MCF 10A (cell line): ENCODE measurements at regions of chr5 and their contacts with region 1.

Region 1: DNA sequence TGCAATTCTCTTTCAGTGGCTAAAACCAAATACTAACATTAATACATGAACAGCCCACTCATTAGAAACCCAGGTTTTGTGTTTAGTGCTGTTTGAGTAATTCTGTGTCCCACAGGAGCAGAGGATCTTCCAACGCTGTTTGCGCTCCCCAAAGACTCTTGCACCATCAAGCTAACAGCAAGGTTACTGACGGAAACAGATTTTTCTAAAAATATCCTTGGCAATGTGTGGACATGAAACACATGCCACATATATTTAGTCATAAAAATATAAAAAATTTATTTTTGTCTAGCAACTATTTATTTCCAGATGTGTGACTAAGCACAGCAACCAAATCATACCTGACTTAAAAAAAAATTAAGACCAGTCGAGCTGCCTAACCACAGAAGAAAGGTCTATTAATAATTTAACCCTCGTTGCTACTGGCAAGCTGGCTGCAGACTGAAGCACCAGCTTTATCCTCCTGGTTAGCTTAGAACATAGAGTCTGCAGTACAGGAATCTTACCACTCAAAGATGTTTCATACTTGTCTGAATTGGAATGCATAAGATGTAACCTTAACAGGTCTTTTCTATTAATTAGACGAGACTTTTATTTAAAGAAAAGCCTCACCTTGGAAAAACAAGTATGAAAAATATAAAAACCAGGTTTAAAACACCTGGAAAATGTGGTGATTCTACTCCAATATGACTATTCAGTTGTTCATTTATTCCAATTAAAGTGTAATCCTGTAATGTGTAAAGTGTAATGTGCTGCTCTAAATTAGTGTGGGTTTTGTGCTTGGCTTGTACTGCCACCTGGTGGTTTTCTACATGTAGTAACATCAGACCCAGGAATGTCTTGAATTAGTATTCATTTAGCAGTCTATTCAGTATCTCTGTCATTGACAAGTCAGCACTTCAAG is 272.5 kb downstream of the EPB41L4A start:
- DNase-seq: peak; percentile 83
- H3K4me3 Mint-ChIP-seq: no peak overlapping the region
- H3K27ac Mint-ChIP-seq: no peak overlapping the region
- H3K4me1 Mint-ChIP-seq: peaks cover 22% of the 10 kb centered on the region
- H3K27me3 Mint-ChIP-seq: no peaks in the 10 kb centered on the region
- CTCF ChIP-seq: peak; percentile 81

Region 2: DNA sequence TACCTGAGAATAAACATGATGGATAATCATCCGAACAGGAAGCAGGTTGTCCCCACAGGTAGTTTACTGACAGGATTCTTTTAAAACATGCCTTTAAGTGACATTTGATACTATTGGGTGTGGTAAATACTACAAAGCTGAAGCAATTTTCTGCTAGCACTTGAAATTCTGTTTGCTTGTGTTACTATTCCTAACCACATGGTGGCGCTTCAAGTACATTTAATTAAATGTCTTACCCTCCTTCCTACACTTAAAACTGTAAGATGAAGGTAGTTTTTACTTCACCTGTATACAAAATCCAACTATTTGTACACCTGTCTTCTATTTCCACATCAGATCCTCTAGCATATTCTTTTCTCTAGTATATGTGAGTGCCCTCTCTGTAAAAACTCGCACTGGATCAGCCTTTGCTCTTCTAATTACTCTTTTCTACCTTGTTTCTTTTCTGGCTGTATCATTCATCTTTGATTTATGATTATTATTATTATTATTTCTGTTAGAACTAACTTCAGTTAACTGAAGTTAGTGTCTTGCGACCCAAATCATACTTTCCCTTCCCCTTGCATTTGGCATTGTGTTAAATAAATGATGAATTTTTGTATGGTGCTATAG is 1389.4 kb before region 1 on chr5:
- CTCF ChIA-PET with region 1: no interaction called
- POLR2A ChIA-PET with region 1: no interaction called
- intact Hi-C with region 1: loop called (anchors 5 kb)
- DNase-seq: peak; percentile 67
- H3K4me3 Mint-ChIP-seq: no peak overlapping the region
- H3K27ac Mint-ChIP-seq: no peak overlapping the region
- H3K4me1 Mint-ChIP-seq: peaks cover 14% of the 10 kb centered on the region
- H3K27me3 Mint-ChIP-seq: no peaks in the 10 kb centered on the region
- CTCF ChIP-seq: peak; percentile 54

Region 3: GRCh38 chr5:111278845-111279504 is 867.6 kb before region 1 on chr5:
- CTCF ChIA-PET with region 1: interaction called, 3 read pairs
- POLR2A ChIA-PET with region 1: no interaction called
- intact Hi-C with region 1: loop called (anchors 1 kb)
- DNase-seq: peak; percentile 74
- H3K4me3 Mint-ChIP-seq: no peak overlapping the region
- H3K27ac Mint-ChIP-seq: no peak overlapping the region
- H3K4me1 Mint-ChIP-seq: no peaks in the 10 kb centered on the region
- H3K27me3 Mint-ChIP-seq: peaks cover 18% of the 10 kb centered on the region
- CTCF ChIP-seq: peak; percentile 84

Region 4: DNA sequence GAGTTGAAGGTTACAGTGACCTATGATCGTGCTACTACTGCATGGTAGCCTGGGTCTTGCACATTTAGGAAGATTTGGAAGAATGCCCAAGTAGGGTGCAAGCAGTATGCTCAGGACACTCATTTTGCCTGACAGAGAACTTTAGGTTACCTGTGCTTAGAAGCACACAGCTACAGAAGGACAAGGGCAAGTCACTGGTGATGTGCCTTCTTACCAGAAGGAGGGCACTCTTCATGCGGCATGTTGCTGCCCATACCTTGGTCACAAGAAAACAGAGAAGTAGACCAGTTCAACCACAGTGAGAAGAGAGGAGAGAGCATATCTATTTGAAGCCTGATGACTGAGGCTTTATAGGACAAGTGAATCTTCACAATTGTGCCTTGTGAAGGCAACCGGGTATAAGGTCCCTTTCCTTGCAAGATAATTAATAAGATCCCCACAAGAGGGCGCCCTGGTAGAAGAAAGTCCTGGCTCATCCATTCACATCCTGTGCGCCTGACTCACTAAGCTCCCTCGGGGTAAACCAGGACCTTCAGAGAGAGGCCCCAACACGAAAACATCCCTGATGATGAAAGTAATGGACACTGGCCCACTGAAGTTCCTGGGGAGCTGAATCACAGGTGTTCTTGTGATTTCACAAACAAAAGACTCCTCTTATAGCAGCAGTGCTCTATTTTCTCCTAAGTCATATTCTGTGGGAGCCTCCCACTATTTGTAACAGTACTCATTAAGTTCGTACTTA is 596.1 kb before region 1 on chr5:
- CTCF ChIA-PET with region 1: interaction called, 28 read pairs
- POLR2A ChIA-PET with region 1: interaction called, 11 read pairs
- intact Hi-C with region 1: loop called (anchors 1 kb)
- DNase-seq: peak; percentile 99
- H3K4me3 Mint-ChIP-seq: no peak overlapping the region
- H3K27ac Mint-ChIP-seq: no peak overlapping the region
- H3K4me1 Mint-ChIP-seq: peaks cover 11% of the 10 kb centered on the region
- H3K27me3 Mint-ChIP-seq: no peaks in the 10 kb centered on the region
- CTCF ChIP-seq: peak; percentile 63

Region 5: DNA sequence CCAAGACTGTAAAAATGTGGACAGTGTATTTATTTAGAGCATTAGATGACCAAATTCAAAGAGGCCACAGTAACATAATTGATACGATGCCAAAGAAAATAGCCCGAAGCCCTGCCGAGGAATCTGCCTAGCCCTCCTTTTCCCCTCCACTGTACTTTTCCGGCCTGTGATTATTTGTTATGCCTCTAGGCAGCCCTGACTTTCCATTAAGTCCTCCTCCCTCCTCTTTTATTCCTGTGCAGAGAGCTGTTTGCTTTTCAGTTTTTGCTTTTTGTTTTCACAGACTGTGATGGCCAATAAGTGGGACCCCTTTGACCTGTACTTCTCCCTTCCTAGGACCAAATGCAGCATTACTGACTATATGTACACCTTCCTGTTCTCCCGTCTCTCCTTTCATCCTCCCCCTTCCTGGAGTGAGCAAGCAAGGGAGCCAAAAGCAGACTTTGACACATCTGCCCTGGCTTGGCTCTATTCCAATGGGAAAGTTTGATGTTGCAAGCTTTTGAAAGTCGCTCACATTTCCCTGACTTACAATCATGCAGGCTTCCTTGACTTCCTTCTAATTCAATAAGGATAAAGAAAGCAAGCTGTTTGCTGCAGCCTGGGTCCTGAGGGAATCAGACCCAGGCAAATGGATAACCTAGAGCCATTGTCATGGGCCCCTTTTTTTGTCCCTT is 465.7 kb before region 1 on chr5:
- CTCF ChIA-PET with region 1: interaction called, 6 read pairs
- POLR2A ChIA-PET with region 1: interaction called, 3 read pairs
- intact Hi-C with region 1: loop called (anchors 1 kb)
- DNase-seq: peak; percentile 98
- H3K4me3 Mint-ChIP-seq: peak overlapping the region; percentile 35
- H3K27ac Mint-ChIP-seq: peak overlapping the region; percentile 83
- H3K4me1 Mint-ChIP-seq: peaks cover 29% of the 10 kb centered on the region
- H3K27me3 Mint-ChIP-seq: no peaks in the 10 kb centered on the region
- CTCF ChIP-seq: no peak

Region 6: DNA sequence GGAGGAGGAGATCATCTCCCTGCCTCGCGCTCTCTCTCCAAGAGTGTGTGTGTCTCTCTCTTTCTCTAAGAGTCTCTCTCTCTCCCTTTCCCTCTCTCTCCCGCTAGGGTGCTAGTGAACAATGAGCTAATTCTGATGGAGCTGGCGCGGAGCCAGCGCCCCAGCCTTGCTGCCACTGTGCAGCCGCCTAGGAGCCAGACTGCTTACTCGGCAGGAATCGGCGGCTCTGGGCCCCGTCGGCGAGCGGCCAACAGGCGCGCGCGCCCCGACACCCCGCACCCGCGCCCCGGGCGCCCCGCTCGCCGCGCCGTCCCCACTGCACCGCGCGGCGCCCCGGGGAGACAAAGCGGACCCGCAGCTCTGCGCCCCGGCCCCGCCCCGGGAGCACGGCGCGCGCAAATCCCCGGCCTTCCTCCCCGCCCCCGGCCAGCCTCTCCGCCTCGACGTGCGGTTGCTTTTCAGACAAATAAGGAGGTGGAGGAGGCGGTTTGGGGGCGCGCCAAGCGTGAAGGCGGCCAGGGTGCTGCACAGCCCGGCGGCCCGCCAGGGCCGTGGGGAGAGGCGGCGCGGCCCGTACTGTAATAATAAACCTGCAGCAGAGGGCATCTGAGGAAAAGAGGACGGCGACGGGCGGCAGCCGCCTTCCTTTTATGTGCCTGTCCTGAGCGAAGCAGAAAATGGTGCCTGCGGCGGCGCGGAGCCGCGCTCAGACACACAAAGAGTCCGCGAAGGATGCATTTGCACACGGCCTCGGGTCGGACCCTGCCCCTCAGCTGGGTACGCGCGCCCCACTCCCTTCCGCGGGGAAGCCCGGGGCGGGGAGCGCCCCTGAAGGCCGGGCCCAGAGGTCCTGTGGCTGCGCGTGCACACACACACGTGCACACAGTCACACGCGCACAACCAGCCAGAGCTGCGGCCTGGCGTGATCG is 389.0 kb before region 1 on chr5:
- CTCF ChIA-PET with region 1: interaction called, 5 read pairs
- POLR2A ChIA-PET with region 1: interaction called, 18 read pairs
- intact Hi-C with region 1: loop called (anchors 1 kb)
- DNase-seq: peak; percentile 95
- H3K4me3 Mint-ChIP-seq: peak overlapping the region; percentile 79
- H3K27ac Mint-ChIP-seq: no peak overlapping the region
- H3K4me1 Mint-ChIP-seq: peaks cover 10% of the 10 kb centered on the region
- H3K27me3 Mint-ChIP-seq: no peaks in the 10 kb centered on the region
- CTCF ChIP-seq: peak; percentile 33

Region 7: GRCh38 chr5:111859533-111860270 is 286.9 kb before region 1 on chr5:
- CTCF ChIA-PET with region 1: interaction called, 8 read pairs
- POLR2A ChIA-PET with region 1: no interaction called
- intact Hi-C with region 1: loop called (anchors 2 kb)
- DNase-seq: peak; percentile 95
- H3K4me3 Mint-ChIP-seq: no peak overlapping the region
- H3K27ac Mint-ChIP-seq: no peak overlapping the region
- H3K4me1 Mint-ChIP-seq: peaks cover 22% of the 10 kb centered on the region
- H3K27me3 Mint-ChIP-seq: no peaks in the 10 kb centered on the region
- CTCF ChIP-seq: no peak

Region 8: DNA sequence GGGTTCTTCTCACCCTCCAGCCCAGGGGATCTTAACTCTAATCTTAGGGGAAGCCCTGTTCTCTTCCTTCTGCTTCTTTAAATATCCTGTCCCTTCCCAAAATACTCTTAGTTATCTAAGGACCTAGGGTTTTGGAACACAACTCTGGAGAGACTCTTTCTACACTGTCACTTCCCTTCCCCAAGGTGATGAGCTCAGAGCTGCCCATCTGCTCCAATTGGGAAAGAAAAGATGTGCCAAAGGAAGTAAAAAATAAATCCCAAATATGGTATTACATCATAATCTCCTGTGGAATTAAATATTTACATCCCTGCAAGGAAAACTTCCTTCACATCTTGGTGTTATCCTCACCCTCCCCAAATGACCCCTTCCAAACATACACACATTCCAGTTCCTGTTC is 18.7 kb before region 1 on chr5:
- CTCF ChIA-PET with region 1: no interaction called
- POLR2A ChIA-PET with region 1: no interaction called
- intact Hi-C with region 1: no loop called
- DNase-seq: no peak
- H3K4me3 Mint-ChIP-seq: no peak overlapping the region
- H3K27ac Mint-ChIP-seq: no peak overlapping the region
- H3K4me1 Mint-ChIP-seq: no peaks in the 10 kb centered on the region
- H3K27me3 Mint-ChIP-seq: no peaks in the 10 kb centered on the region
- CTCF ChIP-seq: no peak

Region 9: GRCh38 chr5:112303685-112304084 is 157.1 kb after region 1 on chr5:
- CTCF ChIA-PET with region 1: no interaction called
- POLR2A ChIA-PET with region 1: no interaction called
- intact Hi-C with region 1: no loop called
- DNase-seq: no peak
- H3K4me3 Mint-ChIP-seq: no peak overlapping the region
- H3K27ac Mint-ChIP-seq: no peak overlapping the region
- H3K4me1 Mint-ChIP-seq: peaks cover 9% of the 10 kb centered on the region
- H3K27me3 Mint-ChIP-seq: no peaks in the 10 kb centered on the region
- CTCF ChIP-seq: no peak